Activated T-helper 2 cell treated with anti-CD3 and anti-CD28 coated beads, Interferon-gamma antibody, Interleukin-2, Interleukin-4, amounts not matched to agents 10 μg/mL and 5 μg/mL and 100 μg/mL, durations not matched to agents 14 hours and 24 hours and 36 hours (primary cell): ENCODE measurements at regions of chr4 and their contacts with region 1.

Region 1: GRCh38 chr4:74444891-74445642 is at the start of gene AREG:
- DNase-seq: peak; percentile 68
- H3K4me3 Mint-ChIP-seq: peak within 1 kb of the TSS; percentile 82
- H3K27ac Mint-ChIP-seq: peak within 1 kb of the TSS; percentile 72
- H3K4me1 Mint-ChIP-seq: peaks cover 7% of the 10 kb centered on the region
- H3K27me3 Mint-ChIP-seq: peaks cover 12% of the 10 kb centered on the region
- total RNA-seq, gene AREG: 1.3 and 1.7 TPM in 2 replicates

Region 2: GRCh38 chr4:74376888-74377483 is 68.1 kb before region 1 on chr4:
- intact Hi-C with region 1: loop called (anchors 2 kb)
- DNase-seq: no peak
- H3K4me3 Mint-ChIP-seq: no peak overlapping the region
- H3K27ac Mint-ChIP-seq: no peak overlapping the region
- H3K4me1 Mint-ChIP-seq: peaks cover 6% of the 10 kb centered on the region
- H3K27me3 Mint-ChIP-seq: peaks cover 8% of the 10 kb centered on the region

Region 3: GRCh38 chr4:74397748-74398426 is 47.2 kb before region 1 on chr4:
- intact Hi-C with region 1: loop called (anchors 5 kb)
- DNase-seq: no peak
- H3K4me3 Mint-ChIP-seq: peak overlapping the region; percentile 92
- H3K27ac Mint-ChIP-seq: peak overlapping the region; percentile 86
- H3K4me1 Mint-ChIP-seq: peaks cover 7% of the 10 kb centered on the region
- H3K27me3 Mint-ChIP-seq: peaks cover 5% of the 10 kb centered on the region

Region 4: DNA sequence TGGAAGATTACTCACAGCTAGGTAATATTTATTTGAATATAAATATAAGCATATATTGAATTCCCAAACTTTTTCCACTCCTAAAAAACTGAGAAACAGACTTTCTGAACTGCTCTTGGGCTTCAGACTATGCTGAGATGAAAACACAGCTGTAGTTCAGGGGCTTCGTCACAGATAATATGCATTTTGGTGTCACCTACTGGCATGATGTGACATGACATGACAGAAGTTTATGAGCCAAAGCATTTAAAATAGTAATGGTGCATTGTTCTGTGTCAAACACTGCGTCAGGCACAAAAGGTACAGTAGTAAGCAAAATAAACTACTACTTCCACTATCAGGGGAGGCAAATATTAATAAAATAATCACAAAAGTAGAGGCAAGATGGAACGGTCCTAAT is 178.0 kb after region 1 on chr4:
- intact Hi-C with region 1: loop called (anchors 5 kb)
- DNase-seq: no peak
- H3K4me3 Mint-ChIP-seq: no peak overlapping the region
- H3K27ac Mint-ChIP-seq: no peak overlapping the region
- H3K4me1 Mint-ChIP-seq: peaks cover 26% of the 10 kb centered on the region
- H3K27me3 Mint-ChIP-seq: peaks cover 2% of the 10 kb centered on the region